Panc1 (cell line): ENCODE measurements at regions of chr1 and their contacts with region 1.

Region 1: DNA sequence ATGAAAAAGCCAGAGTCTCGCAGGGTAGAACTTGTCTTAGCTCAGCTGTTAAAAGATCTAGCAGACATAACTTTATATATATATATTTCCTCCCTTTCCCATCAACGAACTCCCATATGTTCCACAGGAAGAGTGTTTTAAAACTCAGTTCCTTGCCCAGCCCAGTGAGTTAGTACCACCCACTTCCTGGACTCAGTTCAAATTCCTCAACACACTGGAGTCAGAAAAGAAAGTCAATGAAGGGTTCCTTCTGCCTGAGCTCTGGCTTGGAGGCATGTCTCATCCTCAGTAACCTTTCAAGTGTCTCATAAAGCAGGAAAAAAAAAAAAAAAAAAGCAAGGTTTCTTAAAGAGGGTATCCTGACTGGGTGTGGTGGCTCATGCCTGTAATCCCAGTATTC is 15.6 kb downstream of the TPM3 start:
- DNase-seq: no peak
- ATAC-seq: no peak
- H3K4me3 ChIP-seq: no peak overlapping the region
- H3K27ac ChIP-seq: no peak overlapping the region
- H3K4me1 ChIP-seq: peaks cover 34% of the 10 kb centered on the region
- H3K27me3 ChIP-seq: no peaks in the 10 kb centered on the region
- CTCF ChIP-seq: no peak

Region 2: DNA sequence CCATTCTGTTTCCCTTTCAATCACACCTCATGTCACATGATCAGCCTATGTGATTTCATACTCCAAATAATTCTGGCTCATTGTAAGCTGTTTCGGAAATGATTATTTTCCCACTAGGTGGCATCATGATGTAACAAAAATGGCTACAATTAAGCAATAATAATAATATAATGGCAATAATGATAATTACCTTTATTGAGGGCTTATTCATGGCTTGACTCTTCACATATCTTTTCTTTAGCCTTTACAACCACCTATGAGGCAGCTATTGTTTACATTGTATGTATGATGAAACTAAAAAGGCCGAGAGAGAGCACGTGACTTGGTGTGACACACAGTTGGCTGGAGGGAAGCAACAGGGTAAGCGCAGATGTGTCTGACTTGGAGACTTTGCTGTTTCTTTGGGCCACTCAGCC is 1431.0 kb before region 1 on chr1:
- CTCF ChIA-PET with region 1: interaction called, 11 read pairs
- POLR2A ChIA-PET with region 1: no interaction called
- in situ Hi-C with region 1: no loop called
- intact Hi-C with region 1: no loop called
- DNase-seq: peak; percentile 22
- ATAC-seq: no peak
- H3K4me3 ChIP-seq: no peak overlapping the region
- H3K27ac ChIP-seq: no peak overlapping the region
- H3K4me1 ChIP-seq: no peaks in the 10 kb centered on the region
- H3K27me3 ChIP-seq: no peaks in the 10 kb centered on the region
- CTCF ChIP-seq: peak; percentile 23; the same call in 1 of the 2 replicates

Region 3: GRCh38 chr1:154157520-154158306 is 18.6 kb before region 1 on chr1:
- CTCF ChIA-PET with region 1: no interaction called
- POLR2A ChIA-PET with region 1: interaction called, 10 read pairs
- in situ Hi-C with region 1: no loop called
- intact Hi-C with region 1: no loop called
- DNase-seq: no peak
- ATAC-seq: no peak
- H3K4me3 ChIP-seq: no peak overlapping the region
- H3K27ac ChIP-seq: peak overlapping the region; percentile 41
- H3K4me1 ChIP-seq: peaks cover 21% of the 10 kb centered on the region
- H3K27me3 ChIP-seq: no peaks in the 10 kb centered on the region
- CTCF ChIP-seq: no peak

Region 4: DNA sequence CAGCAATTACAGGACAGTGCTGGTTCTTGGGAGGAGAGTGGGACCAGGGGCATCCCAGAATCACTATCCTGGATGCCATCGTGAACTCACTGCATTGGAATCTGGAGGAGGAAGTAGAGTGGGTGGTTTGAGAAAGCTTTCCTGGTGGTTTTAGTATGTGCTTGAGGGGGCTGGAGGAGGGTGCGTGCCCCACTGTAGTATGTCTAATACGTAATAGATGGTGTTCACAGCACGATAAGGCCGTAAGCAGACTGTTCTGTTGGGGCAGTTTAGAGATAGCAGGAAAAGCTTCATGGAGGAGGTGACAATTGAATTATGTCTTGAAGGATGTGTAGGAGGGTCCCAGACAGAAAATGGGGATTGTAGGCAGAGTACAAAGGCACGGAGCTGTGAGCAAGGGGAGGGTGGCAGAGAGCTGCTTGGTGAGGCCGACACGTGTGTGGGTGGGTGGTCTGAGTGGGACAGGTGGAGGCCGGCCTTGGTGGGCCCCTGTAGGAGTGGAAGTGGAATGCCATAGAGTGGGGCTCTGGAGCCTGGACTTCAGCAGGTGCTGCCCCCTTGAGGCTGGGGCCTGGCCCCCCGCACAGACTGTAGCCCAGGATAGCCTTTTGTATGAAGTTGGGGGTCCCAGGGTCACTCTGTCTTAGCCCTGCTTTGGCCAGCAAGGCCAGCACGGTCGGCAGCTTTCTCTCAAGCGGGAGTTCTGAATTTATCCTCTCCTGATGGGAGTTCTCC is 265.8 kb after region 1 on chr1:
- CTCF ChIA-PET with region 1: no interaction called
- POLR2A ChIA-PET with region 1: no interaction called
- in situ Hi-C with region 1: no loop called
- intact Hi-C with region 1: no loop called
- DNase-seq: no peak
- ATAC-seq: peak; percentile 61; the same call in 1 of the 2 replicates
- H3K4me3 ChIP-seq: no peak overlapping the region
- H3K27ac ChIP-seq: no peak overlapping the region
- H3K4me1 ChIP-seq: no peaks in the 10 kb centered on the region
- H3K27me3 ChIP-seq: no peaks in the 10 kb centered on the region
- CTCF ChIP-seq: no peak